ENCODE measurements at regions of chr5 and their contacts with region 1.

Region 1: GRCh38 chr5:72597456-72597948 is 90.3 kb upstream of the ZNF366 start:
- DNase-seq: peak; percentile 78 to 94 (median 84)
- ATAC-seq: peak; percentile 98
- H3K4me3 ChIP-seq: no peak overlapping the region
- H3K27ac ChIP-seq: peak overlapping the region; percentile 93
- H3K4me1 ChIP-seq: peaks cover 10 to 35% of the 10 kb centered on the region in 2 experiments
- H3K27me3 ChIP-seq: no peaks in the 10 kb centered on the region
- CTCF ChIP-seq: no peak
- EP300 ChIP-seq: peak; percentile 97
- POLR2A ChIP-seq: no peak
- RAD21 ChIP-seq: peak in 1 of 2 experiments; percentile 4; a peak in 2 of 4 replicates

Region 2: DNA sequence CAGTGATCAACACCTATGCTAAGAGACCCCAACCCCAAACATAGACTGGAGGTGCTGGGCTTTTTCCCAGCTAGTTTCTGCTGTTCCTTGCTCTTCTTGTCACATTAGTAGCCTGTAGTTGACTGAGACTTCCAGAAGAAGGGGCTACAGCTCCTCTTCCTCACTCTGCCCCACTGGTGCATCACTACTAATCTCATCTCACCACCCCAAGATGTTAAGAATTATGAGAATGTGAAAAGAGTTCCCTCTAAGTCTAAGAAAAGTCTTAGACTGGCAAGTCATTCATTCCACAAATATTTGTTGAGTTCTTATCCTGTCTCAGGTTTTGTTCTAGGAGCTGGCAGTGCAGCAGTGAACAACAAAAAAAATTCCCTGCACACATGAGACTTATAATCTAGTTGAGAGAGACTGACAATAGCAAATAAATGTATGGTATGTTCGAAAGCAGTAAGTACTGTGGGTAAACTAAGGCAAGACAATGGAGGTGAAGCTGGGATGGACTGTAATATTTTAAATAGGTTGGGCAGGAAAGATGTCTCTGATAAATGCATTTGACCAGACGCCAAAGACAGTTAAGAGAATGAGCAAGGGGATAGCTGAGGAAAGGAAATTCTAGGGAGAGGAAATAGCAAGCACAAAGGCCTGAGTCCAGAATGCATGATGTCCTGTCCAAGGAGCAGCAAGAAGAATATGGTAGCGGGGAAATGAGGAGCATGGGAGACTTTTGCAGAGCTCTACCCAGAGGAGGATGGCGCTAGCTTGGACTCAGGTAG is 185.0 kb before region 1 on chr5:
- CTCF ChIA-PET with region 1: no interaction called
- POLR2A ChIA-PET with region 1: no interaction called
- in situ Hi-C with region 1: no loop called
- intact Hi-C with region 1: no loop called
- DNase-seq: no peak
- ATAC-seq: no peak
- H3K4me3 ChIP-seq: no peak overlapping the region
- H3K27ac ChIP-seq: no peak overlapping the region
- H3K4me1 ChIP-seq: peaks cover 0 to 3% of the 10 kb centered on the region in 2 experiments; a peak in 1 of 5 replicates
- H3K27me3 ChIP-seq: peaks cover 0 to 12% of the 10 kb centered on the region in 2 experiments; a peak in 1 of 5 replicates
- CTCF ChIP-seq: peak in 1 of 3 experiments; percentile 31; a peak in 2 of 6 replicates
- EP300 ChIP-seq: no peak
- POLR2A ChIP-seq: no peak
- RAD21 ChIP-seq: peak; percentile 33 to 60

Region 3: DNA sequence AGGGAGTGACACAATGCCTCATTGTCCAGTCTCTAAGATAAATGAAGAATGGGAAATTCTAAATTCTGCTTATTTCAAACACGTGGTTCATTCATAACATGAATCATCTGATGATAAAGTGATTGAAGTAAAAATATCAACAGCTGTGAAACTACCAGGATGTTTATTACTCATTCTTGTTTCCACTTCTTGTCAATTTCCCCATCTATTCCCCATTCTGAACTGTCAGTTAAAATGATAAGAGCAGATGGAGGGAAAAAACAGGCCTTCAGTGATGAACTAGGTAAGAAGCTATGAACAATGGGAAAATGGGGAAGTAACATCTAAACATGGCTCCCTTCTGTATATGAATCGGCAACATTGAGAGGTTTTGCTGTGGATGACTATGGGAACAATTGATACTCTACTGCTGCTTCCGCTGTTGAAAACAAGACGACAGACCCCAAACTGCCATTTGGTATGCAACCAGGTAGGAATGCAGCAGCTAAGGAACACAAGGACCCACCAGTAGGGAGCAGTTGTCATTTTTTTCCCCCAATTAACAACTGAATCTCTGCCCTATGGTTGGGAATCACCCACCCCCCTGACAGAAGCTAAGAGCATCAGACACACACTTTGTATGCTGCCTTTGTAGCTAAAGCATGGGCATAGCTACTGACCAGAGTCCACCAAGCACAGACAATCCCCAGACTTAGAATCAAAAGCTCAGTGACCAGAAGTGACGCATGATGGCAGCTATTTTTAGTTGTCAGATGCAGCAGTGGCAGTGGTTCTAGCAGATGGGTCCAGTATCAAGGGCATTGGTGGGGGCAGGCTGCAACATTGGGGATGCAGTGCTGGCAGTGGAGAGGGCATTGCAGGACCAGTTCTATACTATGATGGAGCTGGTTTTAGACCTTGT is 37.4 kb before region 1 on chr5:
- CTCF ChIA-PET with region 1: no interaction called
- POLR2A ChIA-PET with region 1: interaction called, 3 read pairs
- in situ Hi-C with region 1: no loop called
- intact Hi-C with region 1: loop called (anchors 2 kb)
- DNase-seq: peak in 1 of 4 experiments; percentile 22
- ATAC-seq: no peak
- H3K4me3 ChIP-seq: no peak overlapping the region
- H3K27ac ChIP-seq: peak overlapping the region; percentile 41; the same call in 2 of the 3 replicates
- H3K4me1 ChIP-seq: peaks cover 26 to 37% of the 10 kb centered on the region in 2 experiments
- H3K27me3 ChIP-seq: no peaks in the 10 kb centered on the region
- CTCF ChIP-seq: no peak
- EP300 ChIP-seq: no peak
- POLR2A ChIP-seq: no peak
- RAD21 ChIP-seq: no peak

Region 4: GRCh38 chr5:72584466-72584865 is 13.0 kb before region 1 on chr5:
- CTCF ChIA-PET with region 1: no interaction called
- POLR2A ChIA-PET with region 1: interaction called, 10 read pairs
- in situ Hi-C with region 1: no loop called
- intact Hi-C with region 1: no loop called
- DNase-seq: peak in 2 of 4 experiments; percentile 17 to 29
- ATAC-seq: peak; percentile 68; the same call in 2 of the 3 replicates
- H3K4me3 ChIP-seq: no peak overlapping the region
- H3K27ac ChIP-seq: no peak overlapping the region
- H3K4me1 ChIP-seq: peaks cover 0 to 18% of the 10 kb centered on the region in 2 experiments; a peak in 3 of 5 replicates
- H3K27me3 ChIP-seq: no peaks in the 10 kb centered on the region
- CTCF ChIP-seq: peak; percentile 6 to 43 (median 18); a peak in 2 of 6 replicates
- EP300 ChIP-seq: no peak
- POLR2A ChIP-seq: no peak
- RAD21 ChIP-seq: peak; percentile 31 to 62; a peak in 2 of 4 replicates